Right cardiac atrium (tissue), 5 donors: ENCODE measurements at regions of chr12 and their contacts with region 1.

Region 1: GRCh38 chr12:123905319-123905925 is 67.2 kb downstream of the CCDC92 start:
- DNase-seq: peak in 2 of 3 donors; percentile 37 to 58
- ATAC-seq: peak in 1 of 2 donors; percentile 50
- H3K4me3 ChIP-seq: no peak overlapping the region
- H3K27ac ChIP-seq: no peak overlapping the region
- H3K4me1 ChIP-seq: no peaks in the 10 kb centered on the region
- H3K27me3 ChIP-seq: no peaks in the 10 kb centered on the region

Region 2: DNA sequence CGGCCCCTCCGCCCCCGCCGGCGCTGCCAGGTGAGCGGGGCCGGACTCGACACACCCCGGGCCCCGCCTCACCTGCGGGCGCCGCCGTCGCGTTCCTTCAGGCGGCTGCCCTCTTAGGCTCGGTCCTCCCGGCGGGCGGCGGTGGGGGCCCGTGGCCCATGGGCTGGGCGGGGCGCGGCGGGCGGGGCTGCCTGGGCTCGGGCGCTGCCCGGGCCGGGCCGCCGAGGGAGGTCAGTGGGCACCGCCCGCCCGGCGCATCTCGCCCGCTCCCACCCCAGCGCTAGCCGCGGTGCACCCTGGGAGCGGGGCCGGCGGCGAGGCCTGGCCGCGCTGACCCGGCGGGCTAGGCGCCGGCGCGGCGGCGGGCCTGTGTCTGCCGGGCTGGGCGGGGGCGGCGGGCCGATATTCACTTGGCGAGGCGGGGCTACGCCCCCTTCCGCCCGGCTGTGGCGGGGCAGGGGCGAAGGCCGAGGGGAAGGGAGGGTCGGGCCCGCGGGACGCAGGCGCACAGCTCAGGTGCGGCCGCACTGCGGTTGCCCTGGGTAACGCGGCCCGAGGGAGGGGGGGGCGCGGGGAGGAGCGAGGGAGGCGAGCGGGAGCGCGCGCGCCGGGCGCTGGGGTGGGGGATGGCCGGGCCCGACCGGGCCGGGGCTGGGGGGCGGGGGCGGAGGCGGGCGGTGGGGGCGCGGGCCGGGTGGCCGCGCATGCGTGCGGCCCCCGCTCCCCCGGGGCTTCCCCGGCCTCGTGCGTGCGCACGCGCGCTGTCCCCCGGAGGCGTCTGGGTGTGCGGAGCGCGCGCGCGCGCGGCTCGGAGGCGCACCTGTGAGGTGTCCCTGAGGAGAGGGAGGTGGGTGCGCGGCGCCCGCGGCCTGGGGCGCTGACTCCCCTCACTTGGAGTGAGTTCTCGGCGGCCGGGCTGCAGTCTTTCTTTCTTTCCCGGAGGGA is 67.3 kb after region 1 on chr12 and contains the starts of genes CCDC92 and ZNF664:
- intact Hi-C with region 1: no loop called
- DNase-seq: peak; percentile 92 to 97 (median 97)
- ATAC-seq: peak; percentile 94 to 95
- H3K4me3 ChIP-seq: peak within 1 kb of the TSS; percentile 97
- H3K27ac ChIP-seq: peak within 1 kb of the TSS; percentile 77
- H3K4me1 ChIP-seq: peaks cover 2% of the 10 kb centered on the region
- H3K27me3 ChIP-seq: no peaks in the 10 kb centered on the region
- total RNA-seq, gene CCDC92: 47.5 to 64.4 (median 52.4) TPM
- total RNA-seq, gene ZNF664: 73.6 to 80.6 (median 77.0) TPM

Region 3: DNA sequence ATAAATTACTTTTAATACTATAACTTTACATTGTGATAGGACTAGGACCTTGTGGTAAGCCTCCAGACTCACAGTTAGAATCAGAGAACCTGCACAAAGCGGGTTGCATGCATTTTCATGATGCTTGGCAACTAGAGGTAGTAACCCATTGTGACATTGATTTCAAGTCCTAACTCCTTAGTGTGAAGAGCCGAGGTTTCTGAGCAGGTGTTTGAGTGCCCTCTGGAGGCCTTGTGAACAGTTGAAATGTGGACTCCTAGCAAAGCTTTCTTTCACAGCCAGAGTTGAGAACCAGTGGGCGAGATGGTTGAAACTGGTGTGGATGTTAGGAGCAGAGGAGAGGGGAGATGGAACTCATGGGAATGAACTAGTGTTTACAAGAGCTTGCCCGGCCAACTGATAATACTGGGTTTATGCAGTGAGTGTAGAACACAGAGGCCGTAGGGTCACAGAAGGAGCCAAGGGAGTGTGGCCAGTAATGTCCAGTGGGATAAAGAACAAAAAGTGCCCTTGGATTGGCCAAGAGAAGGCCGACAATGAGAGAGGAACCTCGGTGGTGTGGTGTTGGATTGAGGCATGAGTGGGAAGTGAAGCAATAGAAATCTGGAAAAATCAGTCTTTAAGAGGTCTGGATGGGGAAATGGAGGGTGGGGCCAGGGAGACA is 78.5 kb after region 1 on chr12:
- intact Hi-C with region 1: loop called (anchors 5 to 10 kb)
- DNase-seq: peak in 2 of 3 donors; percentile 43 to 68
- ATAC-seq: peak; percentile 74 to 89
- H3K4me3 ChIP-seq: no peak overlapping the region
- H3K27ac ChIP-seq: peak overlapping the region; percentile 55
- H3K4me1 ChIP-seq: peaks cover 16% of the 10 kb centered on the region
- H3K27me3 ChIP-seq: no peaks in the 10 kb centered on the region